RWPE1 (cell line): ENCODE measurements at regions of chr15 and their contacts with region 1.

Region 1: DNA sequence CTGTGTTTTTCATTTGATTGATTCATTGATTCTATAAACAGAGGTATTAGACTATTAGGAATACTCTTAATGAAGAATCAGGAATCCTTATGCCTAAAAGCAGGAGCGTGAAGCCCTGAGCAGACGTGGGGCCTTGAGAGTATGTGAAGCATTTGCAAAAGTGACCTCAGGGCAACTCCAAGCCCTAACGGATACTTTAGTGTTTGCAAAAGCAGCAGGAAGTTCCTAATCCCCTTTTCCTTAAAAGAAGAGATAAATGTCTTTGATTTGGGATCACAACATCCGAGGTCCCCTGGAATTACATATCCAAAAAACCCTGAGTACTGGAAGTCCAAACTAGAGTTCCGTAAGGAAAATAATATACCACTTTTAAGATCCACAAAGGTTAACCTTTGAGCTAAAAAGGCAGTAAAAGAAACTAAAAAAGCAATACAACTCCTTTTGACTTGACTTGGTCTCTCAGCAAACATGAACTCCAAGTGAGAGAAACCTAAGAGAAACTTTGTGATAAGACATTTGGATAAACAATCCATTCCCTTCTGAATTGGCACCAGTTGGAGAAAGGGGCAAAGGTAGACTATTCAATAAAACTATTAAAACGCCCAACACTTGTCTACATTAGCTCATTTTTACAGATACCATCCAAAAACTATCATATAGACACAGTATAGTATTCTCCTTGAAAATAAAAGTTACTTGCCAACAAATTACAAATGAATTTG is 27.4 kb downstream of the PRTG start:
- DNase-seq: no peak
- H3K27ac ChIP-seq: no peak overlapping the region
- CTCF ChIP-seq: no peak

Region 2: GRCh38 chr15:55535436-55535835 is 180.1 kb before region 1 on chr15:
- CTCF ChIA-PET with region 1: interaction called, 10 read pairs
- POLR2A ChIA-PET with region 1: no interaction called
- DNase-seq: no peak
- H3K27ac ChIP-seq: no peak overlapping the region
- CTCF ChIP-seq: no peak